ENCODE measurements at regions of chr1 and their contacts with region 1.

Region 1: DNA sequence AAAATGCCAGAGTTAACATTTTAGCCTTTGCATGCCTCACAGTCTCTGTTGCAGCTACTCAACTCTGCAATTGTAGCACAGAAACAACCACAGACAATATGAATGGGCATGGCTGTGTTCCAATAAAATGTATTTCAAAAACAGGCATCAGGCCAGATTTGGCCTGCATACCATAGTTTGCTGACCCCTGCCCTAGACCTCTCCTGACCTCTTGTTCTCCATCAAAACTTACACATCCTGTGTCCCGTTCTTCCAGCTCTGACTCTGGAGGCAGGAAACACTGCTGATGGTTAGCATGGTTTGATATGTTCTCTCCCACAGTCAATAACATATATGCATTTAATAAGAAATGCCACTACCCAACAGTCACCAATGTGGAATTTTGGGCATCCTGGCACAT is 138.6 kb downstream of the LMX1A start:
- DNase-seq: no peak
- ATAC-seq: no peak
- H3K4me3 ChIP-seq: no peak overlapping the region
- H3K27ac ChIP-seq: no peak overlapping the region
- H3K4me1 ChIP-seq: peaks cover 0 to 3% (median 0%) of the 10 kb centered on the region in 12 donors
- H3K27me3 ChIP-seq: peaks cover 0 to 5% (median 0%) of the 10 kb centered on the region in 9 donors
- CTCF ChIP-seq: no peak
- POLR2A ChIP-seq: no peak

Region 2: GRCh38 chr1:165187031-165188009 is 30.6 kb before region 1 on chr1:
- intact Hi-C with region 1: loop called in 1 of 10 experiments (anchors 1 kb)
- DNase-seq: no peak
- ATAC-seq: no peak
- H3K4me3 ChIP-seq: no peak overlapping the region
- H3K27ac ChIP-seq: no peak overlapping the region
- H3K4me1 ChIP-seq: no peaks in the 10 kb centered on the region
- H3K27me3 ChIP-seq: peaks cover 0 to 3% (median 0%) of the 10 kb centered on the region in 9 donors
- CTCF ChIP-seq: no peak
- POLR2A ChIP-seq: no peak

Region 3: DNA sequence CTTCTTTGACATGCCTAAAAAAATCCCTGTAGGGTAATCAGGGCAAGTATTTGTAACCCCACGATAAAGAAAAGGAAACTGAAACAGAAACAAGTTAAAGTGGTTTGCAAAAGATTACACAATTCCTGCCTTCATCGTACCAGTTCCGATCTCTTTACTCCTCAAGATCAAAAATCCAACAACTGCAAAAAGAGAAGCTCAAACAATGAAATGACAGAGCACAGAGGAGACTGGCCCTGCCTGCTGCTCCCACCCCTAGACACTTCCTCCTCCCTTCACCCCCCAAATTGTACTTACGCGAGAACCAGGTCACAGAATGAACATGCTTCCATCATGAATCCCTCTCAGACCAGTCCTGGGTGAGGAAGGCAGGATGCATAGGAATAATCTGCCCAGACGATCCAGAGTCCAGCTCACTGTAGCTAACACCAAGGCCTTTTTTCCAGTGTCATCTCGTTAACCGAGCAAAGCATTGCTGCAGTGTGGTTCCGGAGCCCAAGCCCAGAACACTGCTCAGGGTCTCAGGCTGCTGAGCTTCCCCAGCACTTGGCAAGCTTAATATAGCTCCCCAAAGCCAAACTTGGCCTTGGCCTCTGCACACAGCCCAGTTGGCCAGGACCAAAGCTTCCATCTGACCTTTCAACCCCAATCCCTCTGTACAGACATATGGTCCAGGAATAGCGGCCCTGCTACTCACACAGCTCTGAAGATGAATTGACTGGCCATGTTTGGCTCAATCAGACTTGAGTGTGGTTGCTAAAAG is 206.7 kb after region 1 on chr1:
- intact Hi-C with region 1: no loop called
- DNase-seq: peak; percentile 40 to 70 (median 47)
- ATAC-seq: peak; percentile 71 to 95 (median 89)
- H3K4me3 ChIP-seq: peak overlapping the region in 8 of 12 donors; percentile 3 to 42 (median 37)
- H3K27ac ChIP-seq: peak overlapping the region; percentile 17 to 80 (median 61)
- H3K4me1 ChIP-seq: peaks cover 0 to 37% (median 20%) of the 10 kb centered on the region in 12 donors
- H3K27me3 ChIP-seq: no peaks in the 10 kb centered on the region
- CTCF ChIP-seq: no peak
- POLR2A ChIP-seq: no peak

Measured in heart left ventricle (tissue), 16 donors.